ENCODE measurements at regions of chr2 and their contacts with region 1.

Region 1: DNA sequence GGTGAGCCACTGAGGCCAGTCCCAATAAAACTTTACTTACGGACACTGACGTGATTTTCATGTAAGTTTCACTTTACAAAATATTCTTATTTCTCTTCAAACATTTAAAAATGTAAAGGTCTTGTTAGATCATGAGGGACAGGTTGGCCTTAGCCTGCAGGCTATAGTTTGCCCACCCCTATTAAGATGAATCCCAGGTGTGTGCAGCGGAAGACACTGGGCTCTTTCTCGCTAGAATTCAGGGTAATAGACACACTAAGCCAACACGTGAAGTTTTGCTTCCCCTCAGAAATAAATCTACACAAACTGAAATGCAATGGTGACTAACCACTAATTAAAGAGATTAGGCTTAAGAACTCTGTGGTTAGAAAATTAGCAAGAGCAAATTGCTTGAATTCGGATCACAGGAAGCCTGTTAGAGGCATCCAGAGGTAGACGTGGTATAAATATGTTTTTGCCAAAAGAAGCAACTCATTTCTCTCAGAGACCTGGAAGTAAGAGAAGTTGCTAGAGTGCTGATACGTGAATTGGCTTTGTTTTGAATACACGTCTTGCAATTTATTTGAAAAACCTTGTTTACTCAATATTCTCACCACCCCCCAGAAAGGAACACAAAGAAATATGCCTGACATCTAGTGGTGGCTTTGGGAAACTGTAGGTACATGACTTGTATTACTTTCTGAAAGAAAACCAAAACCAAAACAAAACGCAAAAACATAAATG is 151.6 kb downstream of the DTNB start:
- DNase-seq: peak in 7 of 9 donors; percentile 59 to 82 (median 72)
- ATAC-seq: peak; percentile 99
- H3K4me3 ChIP-seq: no peak overlapping the region
- H3K4me3 Mint-ChIP-seq: peak overlapping the region in 8 of 10 donors; percentile 4 to 77 (median 42)
- H3K27ac ChIP-seq: no peak overlapping the region
- H3K27ac Mint-ChIP-seq: peak overlapping the region in 8 of 9 donors; percentile 38 to 88 (median 66)
- H3K4me1 ChIP-seq: peaks cover 4 to 5% of the 10 kb centered on the region in 2 donors
- H3K4me1 Mint-ChIP-seq: peaks cover 0 to 25% (median 8%) of the 10 kb centered on the region in 7 donors
- H3K27me3 ChIP-seq: no peaks in the 10 kb centered on the region
- H3K27me3 Mint-ChIP-seq: no peaks in the 10 kb centered on the region

Region 2: GRCh38 chr2:25165992-25166875 is 355.6 kb before region 1 on chr2:
- CTCF ChIA-PET with region 1: interaction called, 4 read pairs
- POLR2A ChIA-PET with region 1: no interaction called
- intact Hi-C with region 1: loop called in 1 of 2 experiments (anchors 1 kb)
- DNase-seq: peak in 7 of 9 donors; percentile 12 to 46 (median 40)
- ATAC-seq: peak; percentile 69
- H3K4me3 ChIP-seq: no peak overlapping the region
- H3K4me3 Mint-ChIP-seq: peak overlapping the region in 7 of 10 donors; percentile 15 to 83 (median 68)
- H3K27ac ChIP-seq: no peak overlapping the region
- H3K27ac Mint-ChIP-seq: peak overlapping the region in 2 of 9 donors; percentile 2 to 69
- H3K4me1 ChIP-seq: no peaks in the 10 kb centered on the region
- H3K4me1 Mint-ChIP-seq: peaks cover 6 to 36% (median 26%) of the 10 kb centered on the region in 7 donors
- H3K27me3 ChIP-seq: no peaks in the 10 kb centered on the region
- H3K27me3 Mint-ChIP-seq: peaks cover 11 to 73% (median 35%) of the 10 kb centered on the region in 5 donors

Region 3: DNA sequence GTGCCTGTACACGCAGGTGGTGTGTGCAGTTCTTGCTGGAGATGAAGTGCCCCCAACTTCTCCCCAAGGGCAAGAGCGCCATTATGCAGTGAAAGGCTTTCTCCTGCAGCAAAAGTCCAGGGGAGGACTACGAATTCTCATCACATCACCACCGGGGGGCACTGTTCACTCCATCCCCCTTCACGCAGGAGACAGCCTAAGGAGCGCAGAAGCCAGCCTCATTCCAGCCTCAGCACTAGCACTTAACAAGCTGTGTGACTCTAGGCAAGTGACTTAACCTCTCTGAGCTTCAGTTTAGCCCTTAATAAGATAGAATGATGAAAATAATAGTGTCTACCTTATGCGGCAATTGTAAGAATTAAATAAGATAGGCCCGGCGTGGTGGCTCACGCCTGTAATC is 212.4 kb before region 1 on chr2:
- CTCF ChIA-PET with region 1: no interaction called
- POLR2A ChIA-PET with region 1: no interaction called
- intact Hi-C with region 1: loop called (anchors 1 kb)
- DNase-seq: peak; percentile 48 to 70 (median 62)
- ATAC-seq: peak; percentile 72
- H3K4me3 ChIP-seq: no peak overlapping the region
- H3K4me3 Mint-ChIP-seq: peak overlapping the region in 5 of 10 donors; percentile 13 to 47 (median 28)
- H3K27ac ChIP-seq: no peak overlapping the region
- H3K27ac Mint-ChIP-seq: peak overlapping the region in 8 of 9 donors; percentile 36 to 89 (median 66)
- H3K4me1 ChIP-seq: peaks cover 21 to 60% of the 10 kb centered on the region in 2 donors
- H3K4me1 Mint-ChIP-seq: peaks cover 48 to 95% (median 80%) of the 10 kb centered on the region in 7 donors
- H3K27me3 ChIP-seq: no peaks in the 10 kb centered on the region
- H3K27me3 Mint-ChIP-seq: no peaks in the 10 kb centered on the region

Region 4: GRCh38 chr2:25323042-25323514 is 198.7 kb before region 1 on chr2:
- CTCF ChIA-PET with region 1: no interaction called
- POLR2A ChIA-PET with region 1: no interaction called
- intact Hi-C with region 1: no loop called
- DNase-seq: no peak
- ATAC-seq: peak; percentile 59
- H3K4me3 ChIP-seq: peak overlapping the region; percentile 6
- H3K4me3 Mint-ChIP-seq: peak overlapping the region in 7 of 10 donors; percentile 4 to 49 (median 29)
- H3K27ac ChIP-seq: peak overlapping the region; percentile 49
- H3K27ac Mint-ChIP-seq: peak overlapping the region; percentile 3 to 83 (median 64)
- H3K4me1 ChIP-seq: peaks cover 19 to 24% of the 10 kb centered on the region in 2 donors
- H3K4me1 Mint-ChIP-seq: peaks cover 37 to 76% (median 68%) of the 10 kb centered on the region in 7 donors
- H3K27me3 ChIP-seq: no peaks in the 10 kb centered on the region
- H3K27me3 Mint-ChIP-seq: no peaks in the 10 kb centered on the region

Region 5: DNA sequence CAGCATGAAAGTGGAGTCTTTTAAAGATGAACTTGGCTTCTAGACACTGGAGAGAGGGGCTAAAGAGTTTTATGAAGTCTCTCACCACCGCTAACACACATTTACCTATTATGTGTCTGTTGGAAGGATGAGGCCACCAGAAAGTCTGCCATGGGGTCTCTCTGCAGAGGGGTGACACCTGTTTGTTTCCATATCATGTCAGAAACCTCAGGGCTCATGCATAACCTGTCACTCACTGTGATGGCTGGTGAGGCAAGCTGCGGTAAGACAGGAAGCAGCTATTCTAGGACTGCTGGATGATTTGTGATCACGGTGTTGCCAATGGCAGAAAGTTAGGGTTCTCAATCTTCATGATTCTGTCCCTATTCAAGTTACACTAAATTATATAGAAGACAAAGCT is 119.3 kb before region 1 on chr2:
- CTCF ChIA-PET with region 1: no interaction called
- POLR2A ChIA-PET with region 1: no interaction called
- intact Hi-C with region 1: loop called in 1 of 2 experiments (anchors 5 kb)
- DNase-seq: no peak
- ATAC-seq: peak; percentile 24
- H3K4me3 ChIP-seq: no peak overlapping the region
- H3K4me3 Mint-ChIP-seq: peak overlapping the region in 1 of 10 donors; percentile 63
- H3K27ac ChIP-seq: no peak overlapping the region
- H3K27ac Mint-ChIP-seq: peak overlapping the region in 3 of 9 donors; percentile 4 to 91 (median 23)
- H3K4me1 ChIP-seq: no peaks in the 10 kb centered on the region
- H3K4me1 Mint-ChIP-seq: peaks cover 5 to 27% (median 13%) of the 10 kb centered on the region in 7 donors
- H3K27me3 ChIP-seq: no peaks in the 10 kb centered on the region
- H3K27me3 Mint-ChIP-seq: no peaks in the 10 kb centered on the region

Region 6: GRCh38 chr2:25879133-25879730 is 357.4 kb after region 1 on chr2:
- CTCF ChIA-PET with region 1: no interaction called
- POLR2A ChIA-PET with region 1: no interaction called
- intact Hi-C with region 1: no loop called
- DNase-seq: peak in 1 of 9 donors; percentile 0
- ATAC-seq: no peak
- H3K4me3 ChIP-seq: peak overlapping the region; percentile 81
- H3K4me3 Mint-ChIP-seq: peak overlapping the region in 9 of 10 donors; percentile 91 to 98 (median 97)
- H3K27ac ChIP-seq: peak overlapping the region; percentile 74
- H3K27ac Mint-ChIP-seq: peak overlapping the region; percentile 93 to 99 (median 99)
- H3K4me1 ChIP-seq: peaks cover 16 to 21% of the 10 kb centered on the region in 2 donors
- H3K4me1 Mint-ChIP-seq: peaks cover 28 to 46% (median 36%) of the 10 kb centered on the region in 7 donors
- H3K27me3 ChIP-seq: no peaks in the 10 kb centered on the region
- H3K27me3 Mint-ChIP-seq: no peaks in the 10 kb centered on the region

Measured in naive thymus-derived CD4-positive, alpha-beta T cell (primary cell).